Ascending aorta (tissue), 2 donors: ENCODE measurements at regions of chr3 and their contacts with region 1.

Region 1: DNA sequence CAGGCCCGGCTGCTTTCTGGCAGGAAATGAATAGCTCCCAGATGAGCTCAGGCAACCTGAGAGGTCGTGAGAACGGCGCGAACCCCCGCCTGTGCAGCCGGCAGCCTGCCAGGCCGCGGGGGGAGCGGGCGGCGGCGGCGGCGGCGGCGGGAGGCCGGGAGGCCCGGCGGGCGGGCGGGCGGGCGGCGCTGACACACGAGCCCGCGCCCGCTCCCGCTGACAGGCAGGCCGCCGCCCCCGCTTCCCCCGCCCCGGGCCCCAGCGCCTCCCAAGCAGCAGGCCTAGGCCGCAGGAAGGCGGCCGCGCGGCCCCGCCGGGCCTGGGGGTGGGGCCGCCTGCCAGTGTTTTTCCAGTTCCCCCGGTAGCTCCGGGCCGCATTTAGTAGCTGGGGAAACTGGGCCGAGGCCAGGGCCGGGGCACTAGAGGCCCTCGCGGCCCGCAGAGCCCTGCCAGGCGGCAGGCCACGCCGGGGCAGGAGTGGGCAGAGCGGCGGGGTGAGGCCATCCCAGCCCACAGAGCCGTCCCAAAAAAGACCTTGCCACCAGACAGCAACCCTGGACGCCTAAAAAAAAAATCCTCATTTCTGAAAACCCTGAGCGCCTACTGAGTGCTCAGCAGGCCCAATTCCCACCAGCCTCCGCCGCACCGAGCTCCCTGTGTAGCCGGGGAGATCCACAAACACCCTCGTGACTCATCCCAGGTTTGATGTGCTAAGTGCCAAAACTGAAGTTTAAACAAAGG is 5.6 kb downstream of the HES1 start:
- DNase-seq: peak; percentile 76 to 95
- H3K4me3 ChIP-seq: peak overlapping the region; percentile 42 to 68
- H3K27ac ChIP-seq: peak overlapping the region; percentile 92 to 98
- H3K4me1 ChIP-seq: peaks cover 9 to 32% of the 10 kb centered on the region in 2 donors
- H3K27me3 ChIP-seq: no peaks in the 10 kb centered on the region
- CTCF ChIP-seq: peak in 1 of 3 experiments; percentile 3

Region 2: DNA sequence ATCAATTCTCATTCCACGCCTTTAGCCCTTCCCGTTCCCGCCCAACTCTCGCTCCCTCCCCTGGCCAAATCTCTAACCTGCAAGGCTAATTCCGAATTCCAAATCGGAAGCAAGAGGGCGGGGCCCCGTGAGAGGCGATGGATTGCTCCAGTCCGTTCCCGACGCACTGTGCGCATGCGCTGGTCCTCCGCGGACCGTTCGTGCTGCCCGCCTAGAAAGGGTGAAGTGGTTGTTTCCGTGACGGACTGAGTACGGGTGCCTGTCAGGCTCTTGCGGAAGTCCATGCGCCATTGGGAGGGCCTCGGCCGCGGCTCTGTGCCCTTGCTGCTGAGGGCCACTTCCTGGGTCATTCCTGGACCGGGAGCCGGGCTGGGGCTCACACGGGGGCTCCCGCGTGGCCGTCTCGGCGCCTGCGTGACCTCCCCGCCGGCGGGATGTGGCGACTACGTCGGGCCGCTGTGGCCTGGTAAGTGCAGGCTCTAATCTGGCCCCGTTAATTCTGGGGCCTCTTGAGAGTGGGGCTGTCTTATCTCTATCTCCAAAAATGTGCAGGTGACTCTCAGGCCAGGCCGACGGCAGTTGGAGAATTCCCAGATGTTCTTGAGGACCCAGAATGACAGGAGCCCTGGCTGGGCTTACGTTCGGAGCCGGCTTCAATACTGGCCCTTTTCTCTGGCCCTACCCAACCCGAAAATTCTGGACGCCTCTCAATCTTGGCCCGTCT is 548.5 kb before region 1 on chr3 and contains the start of gene OPA1:
- intact Hi-C with region 1: loop called (anchors 5 kb)
- DNase-seq: peak; percentile 91 to 98
- H3K4me3 ChIP-seq: peak within 1 kb of the TSS; percentile 82 to 84
- H3K27ac ChIP-seq: peak within 1 kb of the TSS; percentile 77 to 88
- H3K4me1 ChIP-seq: peaks cover 4 to 10% of the 10 kb centered on the region in 2 donors
- H3K27me3 ChIP-seq: no peaks in the 10 kb centered on the region
- CTCF ChIP-seq: peak in 2 of 3 experiments; percentile 19 to 37
- total RNA-seq, gene OPA1: 19.5 TPM

Region 3: DNA sequence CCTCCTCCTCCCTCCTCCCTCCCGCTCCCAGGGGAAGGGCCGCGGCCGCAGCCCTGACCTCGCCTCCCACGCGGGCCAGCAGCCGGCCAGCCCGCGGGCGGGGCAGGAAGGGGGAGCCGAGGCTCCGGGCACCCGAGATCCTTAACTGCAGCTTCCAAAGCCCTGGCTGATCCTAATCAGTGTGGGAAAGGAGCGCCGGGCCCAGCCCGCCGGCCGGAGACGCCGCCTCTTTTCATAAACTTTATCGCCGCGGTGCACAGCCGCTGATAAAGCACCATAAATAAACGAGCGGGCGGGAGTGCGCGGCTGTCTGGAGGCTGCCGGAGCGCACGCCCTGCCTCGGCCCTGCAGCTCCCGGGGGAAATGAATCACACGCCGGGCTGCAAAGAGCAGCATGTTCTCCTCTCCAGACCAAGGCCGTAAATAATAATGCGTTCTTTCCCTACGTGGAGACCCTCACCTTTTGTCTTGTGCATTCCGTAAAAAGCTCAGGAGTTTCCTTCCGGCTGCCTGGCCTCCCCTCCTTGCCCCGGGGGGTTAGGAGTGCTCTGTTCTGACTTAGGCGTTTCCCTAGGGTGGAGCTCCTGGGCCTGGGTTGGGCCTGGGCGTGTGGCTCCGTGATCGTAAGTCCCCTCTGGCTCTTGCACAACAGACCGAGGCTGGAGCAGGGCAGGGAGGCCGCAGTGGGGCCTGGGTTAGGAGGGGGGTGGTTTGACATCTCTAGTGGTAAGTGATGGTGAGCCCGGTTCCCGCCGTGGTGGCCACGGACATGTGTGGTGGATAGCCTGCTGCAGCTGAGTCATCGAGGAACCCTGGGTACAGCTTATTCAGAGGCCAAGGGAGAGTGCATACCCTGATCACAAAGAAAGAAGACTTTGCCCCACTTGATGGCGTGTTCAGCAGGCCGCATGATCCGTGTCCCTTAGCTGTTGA is 138.2 kb before region 1 on chr3:
- intact Hi-C with region 1: loop called (anchors 2 kb)
- DNase-seq: peak; percentile 82 to 95
- H3K4me3 ChIP-seq: peak overlapping the region; percentile 55 to 57
- H3K27ac ChIP-seq: peak overlapping the region; percentile 70 to 90
- H3K4me1 ChIP-seq: peaks cover 4 to 29% of the 10 kb centered on the region in 2 donors
- H3K27me3 ChIP-seq: no peaks in the 10 kb centered on the region
- CTCF ChIP-seq: no peak

Region 4: GRCh38 chr3:194255252-194256039 is 113.9 kb after region 1 on chr3:
- intact Hi-C with region 1: no loop called
- DNase-seq: peak in 1 of 2 donors; percentile 75
- H3K4me3 ChIP-seq: no peak overlapping the region
- H3K27ac ChIP-seq: no peak overlapping the region
- H3K4me1 ChIP-seq: no peaks in the 10 kb centered on the region
- H3K27me3 ChIP-seq: no peaks in the 10 kb centered on the region
- CTCF ChIP-seq: no peak

Region 5: DNA sequence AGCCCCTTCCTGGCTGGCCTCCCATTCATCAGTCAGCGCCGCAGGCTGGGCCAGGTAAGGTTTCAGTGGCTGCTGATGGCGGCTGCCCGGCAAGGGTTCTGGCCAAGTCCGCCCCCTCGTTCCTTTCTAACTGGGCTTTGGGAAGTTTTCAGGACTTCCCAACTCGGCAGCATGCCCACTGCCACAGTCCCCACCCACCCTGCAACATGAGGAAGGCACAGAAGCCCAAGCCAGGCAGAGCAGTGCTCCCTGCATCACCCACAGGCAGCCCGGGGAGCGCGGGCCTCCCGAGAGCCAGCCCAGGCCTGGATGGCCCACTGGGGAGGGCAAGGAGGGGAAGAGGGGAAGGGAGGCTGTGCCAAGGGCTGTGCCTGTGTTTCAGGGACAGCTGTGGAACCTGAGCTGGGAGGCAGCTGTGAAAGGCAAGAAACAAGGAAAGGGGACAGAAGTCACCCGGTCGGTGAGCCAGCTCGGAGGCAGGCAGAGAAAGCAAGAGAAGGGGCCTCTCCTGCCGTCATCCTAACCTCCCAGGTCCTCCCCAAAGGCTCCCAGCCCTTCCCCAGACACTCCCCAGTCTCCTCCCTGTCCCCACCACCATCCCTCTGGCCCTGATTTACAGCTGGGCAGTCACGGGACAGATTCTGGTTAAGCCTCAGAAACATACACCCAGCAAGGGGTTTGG is 135.7 kb after region 1 on chr3:
- intact Hi-C with region 1: loop called (anchors 2 kb)
- DNase-seq: peak in 1 of 2 donors; percentile 87
- H3K4me3 ChIP-seq: peak overlapping the region in 1 of 2 donors; percentile 6
- H3K27ac ChIP-seq: peak overlapping the region; percentile 73 to 84
- H3K4me1 ChIP-seq: peaks cover 13 to 38% of the 10 kb centered on the region in 2 donors
- H3K27me3 ChIP-seq: no peaks in the 10 kb centered on the region
- CTCF ChIP-seq: no peak

Region 6: DNA sequence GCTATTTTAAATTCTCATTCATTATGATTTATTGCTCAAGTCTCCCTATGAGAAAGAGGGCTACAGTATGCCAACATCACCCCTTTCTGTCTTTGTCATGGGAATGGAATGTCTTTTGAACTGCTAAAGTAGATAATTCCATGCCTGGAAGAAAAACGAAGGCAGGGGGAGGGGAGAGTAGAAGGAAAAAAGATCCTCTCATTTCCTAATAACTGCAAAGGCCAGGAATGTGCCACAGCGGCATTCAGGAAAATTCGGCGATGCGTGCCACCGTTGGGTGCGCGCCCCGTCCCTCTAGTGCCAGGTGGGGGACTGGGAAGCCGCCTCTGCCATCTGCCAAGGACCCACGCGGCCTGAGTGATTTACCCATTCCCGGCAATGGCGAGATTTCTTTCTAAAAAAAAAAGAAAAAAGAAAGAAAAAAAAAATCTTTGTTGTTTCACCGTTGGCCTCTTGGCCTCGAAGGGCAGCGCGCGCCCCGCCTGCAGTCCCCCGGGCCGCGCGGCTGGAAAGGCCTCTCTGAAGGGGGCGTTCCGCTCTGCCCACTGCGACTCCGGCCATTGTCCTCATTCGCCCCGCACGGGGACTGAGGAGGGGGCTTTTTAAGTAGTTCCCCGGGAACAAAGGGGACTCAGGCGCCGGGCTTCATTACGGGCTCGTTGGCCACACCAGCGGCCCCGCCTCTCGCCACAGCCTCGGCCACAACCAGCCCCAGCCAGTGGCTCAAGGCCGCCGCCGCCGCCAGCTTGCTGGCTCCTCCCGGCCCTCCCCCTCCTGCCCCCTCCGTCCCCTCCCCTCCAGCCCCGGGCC is 155.1 kb after region 1 on chr3:
- intact Hi-C with region 1: loop called (anchors 2 kb)
- DNase-seq: peak in 1 of 2 donors; percentile 80
- H3K4me3 ChIP-seq: peak overlapping the region; percentile 35 to 52
- H3K27ac ChIP-seq: peak overlapping the region in 1 of 2 donors; percentile 1
- H3K4me1 ChIP-seq: peaks cover 0 to 18% of the 10 kb centered on the region in 2 donors
- H3K27me3 ChIP-seq: no peaks in the 10 kb centered on the region
- CTCF ChIP-seq: no peak